Posterior cingulate gyrus (tissue), 11 donors: ENCODE measurements at regions of chr11 and their contacts with region 1.

Region 1: GRCh38 chr11:44621140-44621681 is 55.7 kb downstream of the CD82 start:
- DNase-seq: peak; percentile 77 to 97 (median 86)

Region 2: DNA sequence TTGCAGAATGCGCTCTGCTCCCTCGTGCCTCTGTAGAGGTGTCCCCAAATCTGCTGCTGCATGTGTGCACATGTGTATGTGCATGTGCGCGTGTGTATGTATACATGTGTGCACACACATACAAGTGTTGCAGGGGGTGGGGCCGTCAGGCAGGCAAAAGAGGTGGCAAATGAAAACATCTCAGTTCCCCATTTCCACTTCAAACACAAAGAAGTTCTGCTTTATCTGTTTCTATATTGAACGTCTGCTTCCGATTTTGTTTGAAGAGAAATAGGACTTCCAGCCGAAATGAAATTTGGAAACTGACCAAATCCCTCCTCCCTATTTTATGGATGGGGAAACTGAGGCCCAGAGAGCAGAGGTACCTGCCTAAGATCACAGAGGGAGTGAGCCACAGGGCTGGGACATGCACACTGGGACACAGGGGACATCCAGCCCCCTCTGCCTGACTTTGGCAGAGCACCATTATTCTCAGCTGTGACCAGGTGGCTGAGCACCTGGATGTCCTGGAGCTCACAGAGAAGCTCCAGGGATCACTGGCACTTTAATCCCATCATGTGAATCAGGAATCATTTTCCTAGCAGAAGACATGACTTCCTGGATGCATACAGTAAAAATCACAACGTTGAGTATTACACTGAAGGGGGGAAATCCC is 270.1 kb before region 1 on chr11:
- intact Hi-C with region 1: no loop called
- DNase-seq: peak in 1 of 10 donors; percentile 40

Region 3: GRCh38 chr11:44565211-44565952 is 55.8 kb before region 1 on chr11 and contains the start of gene CD82:
- intact Hi-C with region 1: loop called (anchors 2 kb)
- DNase-seq: peak; percentile 98 to 100 (median 100)

Region 4: GRCh38 chr11:44775366-44775984 is 154.3 kb after region 1 on chr11:
- intact Hi-C with region 1: loop called (anchors 5 kb)
- DNase-seq: peak in 3 of 10 donors; percentile 17 to 25 (median 24)

Region 5: DNA sequence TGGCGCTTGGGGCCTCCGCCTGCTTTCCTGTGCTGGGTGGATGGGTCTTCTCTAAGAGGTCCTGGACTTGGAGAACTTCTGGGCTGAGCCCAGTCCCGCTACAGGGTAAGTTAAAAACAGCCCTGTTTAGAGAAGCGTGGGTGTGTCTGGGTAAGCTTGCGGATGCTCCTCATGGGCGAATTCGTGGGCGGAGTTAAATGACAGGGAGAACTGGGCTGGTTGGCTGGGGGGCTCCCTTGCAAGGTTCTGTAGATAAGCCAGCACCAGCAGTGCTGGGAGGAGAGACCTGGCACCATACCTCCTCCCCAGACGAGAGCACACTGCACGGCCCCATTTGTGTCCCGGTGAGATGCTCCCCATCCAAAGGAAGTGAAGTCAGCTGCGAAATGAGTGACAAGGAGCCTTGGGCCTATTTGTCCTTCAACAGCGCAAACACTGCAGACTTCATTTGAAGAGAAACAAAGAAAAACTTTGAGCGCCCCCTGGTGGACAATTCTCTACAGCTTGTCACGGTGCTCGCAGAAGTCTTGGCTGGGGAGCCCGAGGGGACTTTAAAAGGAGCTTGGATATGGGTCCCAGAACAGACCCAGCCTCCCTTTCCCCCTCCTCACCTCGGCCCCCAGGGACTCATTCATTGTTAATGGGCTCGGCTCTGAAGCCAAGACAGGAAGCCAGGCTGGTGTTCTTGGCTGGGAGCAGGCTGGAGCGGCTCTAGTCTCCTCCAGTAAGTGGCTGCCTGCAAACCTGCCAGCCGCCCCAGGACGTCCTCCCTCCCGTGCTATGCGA is 290.0 kb after region 1 on chr11:
- intact Hi-C with region 1: loop called (anchors 1 kb)
- DNase-seq: peak; percentile 53 to 95 (median 88)